Activated B cell treated with CpG ODN at 0.5 μM for 24 hours (primary cell): ENCODE measurements at regions of chr13 and their contacts with region 1.

Region 1: DNA sequence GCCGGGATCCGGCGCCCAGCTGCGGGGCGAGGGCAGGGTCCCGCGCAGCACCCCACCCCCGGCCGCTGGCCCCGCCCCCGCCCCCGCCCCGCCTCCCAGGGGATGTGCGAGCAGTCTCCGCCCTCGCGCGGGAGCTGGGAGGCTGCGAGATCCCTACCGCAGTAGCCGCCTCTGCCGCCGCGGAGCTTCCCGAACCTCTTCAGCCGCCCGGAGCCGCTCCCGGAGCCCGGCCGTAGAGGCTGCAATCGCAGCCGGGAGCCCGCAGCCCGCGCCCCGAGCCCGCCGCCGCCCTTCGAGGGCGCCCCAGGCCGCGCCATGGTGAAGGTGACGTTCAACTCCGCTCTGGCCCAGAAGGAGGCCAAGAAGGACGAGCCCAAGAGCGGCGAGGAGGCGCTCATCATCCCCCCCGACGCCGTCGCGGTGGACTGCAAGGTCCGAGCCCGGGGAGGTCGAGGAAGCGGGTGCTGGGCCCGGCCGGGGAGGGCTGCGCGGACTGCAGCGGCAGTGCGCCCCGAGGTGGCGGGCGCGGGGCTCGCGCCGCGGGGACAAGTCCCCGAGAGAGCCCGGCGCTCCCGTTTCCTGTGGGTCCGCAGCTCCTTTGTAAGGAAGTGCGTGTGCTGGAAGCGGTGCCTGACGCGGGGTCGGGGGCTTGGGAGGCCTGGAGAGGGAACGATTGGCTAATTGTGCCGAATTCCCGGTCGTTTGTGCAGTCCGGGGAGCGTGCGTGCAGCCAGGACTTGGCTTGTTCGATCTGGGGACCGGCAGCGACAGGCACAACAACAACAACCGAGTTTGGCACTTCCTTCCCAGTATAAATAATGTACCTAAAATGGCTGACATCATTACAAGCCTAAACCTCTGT is at the start of gene ITM2B:
- DNase-seq: peak; percentile 65
- ATAC-seq: peak; percentile 76
- H3K4me3 Mint-ChIP-seq: peak within 1 kb of the TSS; percentile 93
- H3K27ac Mint-ChIP-seq: peak within 1 kb of the TSS; percentile 87
- H3K4me1 Mint-ChIP-seq: peaks cover 54% of the 10 kb centered on the region
- H3K27me3 Mint-ChIP-seq: peaks cover 7% of the 10 kb centered on the region
- CTCF ChIP-seq: no peak
- total RNA-seq, gene ITM2B: 102 and 114 TPM in 2 replicates

Region 2: GRCh38 chr13:48094781-48095502 is 138.3 kb before region 1 on chr13 and contains the start of gene MED4:
- CTCF ChIA-PET with region 1: interaction called, 6 read pairs
- POLR2A ChIA-PET with region 1: interaction called, 6 read pairs
- intact Hi-C with region 1: loop called (anchors 1 kb)
- DNase-seq: peak; percentile 99
- ATAC-seq: peak; percentile 99
- H3K4me3 Mint-ChIP-seq: peak within 1 kb of the TSS; percentile 96
- H3K27ac Mint-ChIP-seq: peak within 1 kb of the TSS; percentile 90
- H3K4me1 Mint-ChIP-seq: peaks cover 34% of the 10 kb centered on the region
- H3K27me3 Mint-ChIP-seq: peaks cover 5% of the 10 kb centered on the region
- CTCF ChIP-seq: peak; percentile 84
- total RNA-seq, gene MED4: 50.4 and 51.9 TPM in 2 replicates

Region 3: DNA sequence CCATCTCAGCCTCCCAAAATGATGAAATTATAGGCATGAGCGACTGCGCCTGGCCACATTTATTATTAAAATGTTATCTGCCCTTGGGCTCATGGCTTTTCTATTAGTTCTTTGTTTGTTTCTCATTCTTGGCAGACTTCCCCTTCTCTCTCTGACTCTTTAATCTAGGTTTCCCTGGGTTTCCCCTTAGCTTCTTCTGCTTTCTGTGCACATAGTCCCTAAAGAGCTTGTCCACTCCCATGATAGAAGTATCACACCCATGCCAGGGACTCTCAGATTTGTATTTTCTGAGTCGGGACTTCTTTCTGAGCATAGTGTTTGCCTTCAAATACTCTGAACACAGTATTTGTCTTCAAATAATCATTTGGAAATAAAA is 38.9 kb before region 1 on chr13:
- CTCF ChIA-PET with region 1: interaction called, 5 read pairs
- POLR2A ChIA-PET with region 1: interaction called, 13 read pairs
- intact Hi-C with region 1: loop called (anchors 1 kb)
- DNase-seq: no peak
- ATAC-seq: peak; percentile 98
- H3K4me3 Mint-ChIP-seq: peak overlapping the region; percentile 60
- H3K27ac Mint-ChIP-seq: peak overlapping the region; percentile 82
- H3K4me1 Mint-ChIP-seq: peaks cover 26% of the 10 kb centered on the region
- H3K27me3 Mint-ChIP-seq: peaks cover 4% of the 10 kb centered on the region
- CTCF ChIP-seq: no peak

Region 4: GRCh38 chr13:48291730-48292129 is 58.5 kb after region 1 on chr13:
- CTCF ChIA-PET with region 1: no interaction called
- POLR2A ChIA-PET with region 1: no interaction called
- intact Hi-C with region 1: loop called (anchors 1 kb)
- DNase-seq: no peak
- ATAC-seq: no peak
- H3K4me3 Mint-ChIP-seq: no peak overlapping the region
- H3K27ac Mint-ChIP-seq: no peak overlapping the region
- H3K4me1 Mint-ChIP-seq: peaks cover 17% of the 10 kb centered on the region
- H3K27me3 Mint-ChIP-seq: no peaks in the 10 kb centered on the region
- CTCF ChIP-seq: no peak

Region 5: DNA sequence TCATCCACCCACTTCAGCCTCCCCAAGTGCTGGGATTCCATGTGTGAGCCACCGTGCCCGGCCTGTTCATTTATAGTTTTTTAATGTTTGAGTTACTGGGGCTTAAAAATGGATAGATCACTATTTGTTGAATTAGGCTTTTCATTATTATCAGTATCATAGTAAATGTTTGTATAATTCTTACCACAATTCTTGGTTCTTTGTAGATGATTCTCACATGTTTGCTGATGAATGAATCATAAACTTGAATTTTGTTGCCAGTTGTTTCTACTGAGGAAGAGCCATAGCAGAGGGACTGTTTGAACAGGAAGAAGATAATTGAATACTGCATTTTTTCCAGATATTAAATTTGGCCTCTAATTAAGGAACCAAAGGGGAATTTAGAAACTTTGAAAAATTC is 182.2 kb after region 1 on chr13:
- CTCF ChIA-PET with region 1: no interaction called
- POLR2A ChIA-PET with region 1: no interaction called
- intact Hi-C with region 1: no loop called
- DNase-seq: no peak
- ATAC-seq: no peak
- H3K4me3 Mint-ChIP-seq: no peak overlapping the region
- H3K27ac Mint-ChIP-seq: no peak overlapping the region
- H3K4me1 Mint-ChIP-seq: peaks cover 16% of the 10 kb centered on the region
- H3K27me3 Mint-ChIP-seq: no peaks in the 10 kb centered on the region
- CTCF ChIP-seq: no peak

Region 6: DNA sequence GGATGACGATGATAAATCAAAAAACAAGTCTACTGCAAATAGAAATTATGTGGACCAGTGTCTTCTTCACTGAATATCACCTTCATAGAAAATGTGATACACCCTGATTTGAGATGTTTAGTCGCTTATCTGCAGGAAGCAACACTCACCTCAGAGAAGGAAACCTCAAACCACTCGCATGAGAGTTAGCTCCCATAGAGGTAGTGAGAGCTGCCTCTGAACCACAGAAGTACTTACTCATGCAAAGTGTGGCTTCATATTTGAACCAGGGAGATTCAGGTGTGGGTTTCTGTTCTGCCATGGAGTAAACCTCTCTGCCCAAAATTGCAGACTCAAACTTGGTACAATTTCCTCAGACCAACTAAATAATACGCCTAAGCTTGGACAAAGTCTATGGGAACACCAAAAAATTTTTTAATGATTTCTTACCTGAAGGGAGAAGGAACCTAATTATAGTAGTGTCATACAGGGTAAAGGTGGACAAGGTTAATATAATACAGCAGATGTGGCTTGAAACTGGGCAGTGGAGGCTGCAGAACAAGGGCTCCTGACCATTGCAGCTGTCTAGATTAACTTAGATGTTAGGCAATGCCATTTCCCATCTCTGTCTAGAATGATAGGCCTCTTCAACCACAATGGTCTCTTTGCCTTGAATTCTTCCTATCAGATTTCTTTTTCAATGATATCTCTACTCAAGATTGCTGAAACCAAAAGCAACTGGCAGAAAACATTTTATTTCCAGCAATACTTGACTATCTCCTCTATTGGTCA is 329.2 kb after region 1 on chr13:
- CTCF ChIA-PET with region 1: no interaction called
- POLR2A ChIA-PET with region 1: no interaction called
- intact Hi-C with region 1: loop called (anchors 5 kb)
- DNase-seq: no peak
- ATAC-seq: peak; percentile 99
- H3K4me3 Mint-ChIP-seq: no peak overlapping the region
- H3K27ac Mint-ChIP-seq: peak overlapping the region; percentile 57
- H3K4me1 Mint-ChIP-seq: peaks cover 24% of the 10 kb centered on the region
- H3K27me3 Mint-ChIP-seq: peaks cover 59% of the 10 kb centered on the region
- CTCF ChIP-seq: no peak